ENCODE measurements at regions of chr5 and their contacts with region 1.

Region 1: DNA sequence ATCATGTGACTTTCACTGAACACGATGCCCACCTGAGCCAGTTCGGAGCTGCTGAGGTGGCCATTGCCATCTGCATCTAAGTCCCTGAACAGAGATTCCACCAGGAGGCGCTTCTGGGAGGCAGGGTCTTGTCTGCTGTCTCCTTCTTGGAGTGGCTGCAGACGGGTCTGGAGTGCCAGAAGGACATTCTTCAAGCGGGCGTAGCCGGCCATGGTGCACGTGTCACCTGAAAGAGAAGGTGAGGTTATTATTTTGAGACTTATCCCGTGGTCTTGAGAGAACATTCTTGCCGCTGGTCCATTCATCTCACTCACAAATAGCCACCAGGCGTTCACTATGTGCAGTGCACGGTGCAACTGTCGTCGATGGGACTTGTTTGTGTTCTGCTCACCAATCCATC is 264.6 kb downstream of the HSPA4 start:
- DNase-seq: peak; percentile 29 to 74
- H3K4me3 ChIP-seq: no peak overlapping the region
- H3K27ac ChIP-seq: no peak overlapping the region
- H3K4me1 ChIP-seq: peaks cover 5 to 11% (median 9%) of the 10 kb centered on the region in 4 experiments
- H3K27me3 ChIP-seq: no peaks in the 10 kb centered on the region
- CTCF ChIP-seq: peak in 2 of 3 experiments; percentile 70 to 76; a peak in 3 of 4 replicates
- EP300 ChIP-seq: no peak
- POLR2A ChIP-seq: no peak
- RAD21 ChIP-seq: peak; percentile 60 to 77

Region 2: GRCh38 chr5:133298447-133298846 is 18.0 kb before region 1 on chr5:
- CTCF ChIA-PET with region 1: interaction called, 116 read pairs
- POLR2A ChIA-PET with region 1: no interaction called
- DNase-seq: no peak
- H3K4me3 ChIP-seq: no peak overlapping the region
- H3K27ac ChIP-seq: no peak overlapping the region
- H3K4me1 ChIP-seq: no peaks in the 10 kb centered on the region
- H3K27me3 ChIP-seq: no peaks in the 10 kb centered on the region
- CTCF ChIP-seq: no peak
- EP300 ChIP-seq: no peak
- POLR2A ChIP-seq: no peak
- RAD21 ChIP-seq: no peak

Region 3: GRCh38 chr5:133336121-133336968 is 19.9 kb after region 1 on chr5:
- CTCF ChIA-PET with region 1: interaction called, 50 read pairs
- POLR2A ChIA-PET with region 1: no interaction called
- DNase-seq: no peak
- H3K4me3 ChIP-seq: no peak overlapping the region
- H3K27ac ChIP-seq: no peak overlapping the region
- H3K4me1 ChIP-seq: peaks cover 0 to 23% (median 5%) of the 10 kb centered on the region in 4 experiments; a peak in 6 of 7 replicates
- H3K27me3 ChIP-seq: no peaks in the 10 kb centered on the region; a peak in 1 of 7 replicates
- CTCF ChIP-seq: no peak
- EP300 ChIP-seq: no peak
- POLR2A ChIP-seq: no peak
- RAD21 ChIP-seq: no peak

Region 4: GRCh38 chr5:133347039-133347438 is 30.6 kb after region 1 on chr5:
- CTCF ChIA-PET with region 1: interaction called, 15 read pairs
- POLR2A ChIA-PET with region 1: no interaction called
- DNase-seq: no peak
- H3K4me3 ChIP-seq: no peak overlapping the region
- H3K27ac ChIP-seq: no peak overlapping the region
- H3K4me1 ChIP-seq: peaks cover 0 to 10% (median 3%) of the 10 kb centered on the region in 4 experiments; a peak in 4 of 7 replicates
- H3K27me3 ChIP-seq: no peaks in the 10 kb centered on the region
- CTCF ChIP-seq: peak; percentile 30 to 38 (median 34)
- EP300 ChIP-seq: no peak
- POLR2A ChIP-seq: no peak
- RAD21 ChIP-seq: peak; percentile 27 to 43

Region 5: DNA sequence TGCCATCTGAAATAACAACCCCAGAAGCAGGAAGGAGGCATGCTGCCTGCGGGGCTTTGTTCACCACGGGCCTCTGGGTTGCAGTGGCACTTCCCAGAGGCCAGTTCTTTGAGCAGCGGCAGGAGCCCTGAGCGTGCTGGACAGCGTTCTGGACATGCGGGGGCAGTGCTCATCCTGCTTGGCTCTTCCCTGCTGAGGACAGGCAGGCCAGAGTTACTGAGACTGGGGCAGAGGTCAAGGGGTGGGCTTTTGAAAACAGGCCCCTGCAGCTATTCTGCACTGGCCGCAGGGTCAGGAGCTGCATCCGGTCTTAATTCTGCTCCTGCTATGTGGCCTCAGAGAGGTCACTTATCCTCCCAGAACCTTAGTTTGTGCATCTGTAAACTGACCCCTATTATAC is 37.3 kb after region 1 on chr5:
- CTCF ChIA-PET with region 1: interaction called, 13 read pairs
- POLR2A ChIA-PET with region 1: no interaction called
- DNase-seq: no peak
- H3K4me3 ChIP-seq: no peak overlapping the region
- H3K27ac ChIP-seq: no peak overlapping the region
- H3K4me1 ChIP-seq: peaks cover 0 to 6% (median 0%) of the 10 kb centered on the region in 4 experiments; a peak in 4 of 7 replicates
- H3K27me3 ChIP-seq: no peaks in the 10 kb centered on the region
- CTCF ChIP-seq: peak in 1 of 3 experiments; percentile 5; a peak in 1 of 4 replicates
- EP300 ChIP-seq: no peak
- POLR2A ChIP-seq: no peak
- RAD21 ChIP-seq: peak in 1 of 2 experiments; percentile 5; a peak in 2 of 4 replicates

Region 6: GRCh38 chr5:133460172-133460758 is 143.8 kb after region 1 on chr5:
- CTCF ChIA-PET with region 1: interaction called, 13 read pairs
- POLR2A ChIA-PET with region 1: no interaction called
- DNase-seq: peak; percentile 31 to 90
- H3K4me3 ChIP-seq: no peak overlapping the region
- H3K27ac ChIP-seq: no peak overlapping the region
- H3K4me1 ChIP-seq: peaks cover 0 to 5% (median 2%) of the 10 kb centered on the region in 4 experiments; a peak in 2 of 7 replicates
- H3K27me3 ChIP-seq: no peaks in the 10 kb centered on the region
- CTCF ChIP-seq: peak; percentile 94 to 97 (median 96)
- EP300 ChIP-seq: no peak
- POLR2A ChIP-seq: no peak
- RAD21 ChIP-seq: peak; percentile 89 to 90